K562 (cell line): ENCODE measurements at regions of chr22 and their contacts with region 1.

Region 1: DNA sequence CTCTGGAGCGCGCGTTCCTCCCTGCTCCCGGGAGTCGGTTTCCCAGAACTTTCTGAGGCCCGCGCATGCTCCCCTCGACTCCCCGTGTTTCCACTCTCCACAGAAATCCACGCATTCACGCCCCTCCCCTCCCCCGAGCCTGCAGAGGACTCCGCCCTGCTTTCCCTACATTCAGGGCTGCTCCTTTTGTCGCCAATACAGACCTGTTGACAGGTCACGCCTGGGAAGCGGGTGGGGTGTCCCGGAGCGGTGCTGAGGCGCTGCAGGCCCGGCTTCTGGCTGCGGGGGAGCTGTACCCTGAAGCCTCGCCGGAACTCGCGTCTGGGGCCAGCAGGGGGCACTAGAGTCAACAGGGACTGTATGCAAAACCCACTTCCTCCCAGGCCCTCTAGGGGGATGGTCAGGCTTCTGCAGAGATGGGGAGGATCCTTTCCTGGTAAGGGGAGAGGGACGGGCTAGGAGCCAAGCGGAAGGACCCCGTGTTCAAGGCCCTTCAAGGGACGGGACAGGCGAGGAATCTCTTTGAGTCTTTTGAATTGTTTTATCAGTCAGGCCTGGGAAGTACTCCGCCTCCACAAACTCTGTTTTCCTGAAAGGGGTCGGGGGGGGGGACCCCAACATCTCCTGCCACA is at the start of gene PRAME:
- DNase-seq: peak; percentile 100
- ATAC-seq: peak; percentile 92
- H3K4me3 ChIP-seq: peak within 1 kb of the TSS; percentile 54
- H3K27ac ChIP-seq: peak within 1 kb of the TSS; percentile 78
- H3K4me1 ChIP-seq: peaks cover 39 to 43% of the 10 kb centered on the region in 2 experiments
- H3K27me3 ChIP-seq: no peaks in the 10 kb centered on the region; a peak in 1 of 5 replicates
- CTCF ChIP-seq: no peak
- EP300 ChIP-seq: no peak
- POLR2A ChIP-seq: no peak
- RAD21 ChIP-seq: no peak
- polyA plus RNA-seq, gene PRAME: 662 to 1,142 TPM

Region 2: DNA sequence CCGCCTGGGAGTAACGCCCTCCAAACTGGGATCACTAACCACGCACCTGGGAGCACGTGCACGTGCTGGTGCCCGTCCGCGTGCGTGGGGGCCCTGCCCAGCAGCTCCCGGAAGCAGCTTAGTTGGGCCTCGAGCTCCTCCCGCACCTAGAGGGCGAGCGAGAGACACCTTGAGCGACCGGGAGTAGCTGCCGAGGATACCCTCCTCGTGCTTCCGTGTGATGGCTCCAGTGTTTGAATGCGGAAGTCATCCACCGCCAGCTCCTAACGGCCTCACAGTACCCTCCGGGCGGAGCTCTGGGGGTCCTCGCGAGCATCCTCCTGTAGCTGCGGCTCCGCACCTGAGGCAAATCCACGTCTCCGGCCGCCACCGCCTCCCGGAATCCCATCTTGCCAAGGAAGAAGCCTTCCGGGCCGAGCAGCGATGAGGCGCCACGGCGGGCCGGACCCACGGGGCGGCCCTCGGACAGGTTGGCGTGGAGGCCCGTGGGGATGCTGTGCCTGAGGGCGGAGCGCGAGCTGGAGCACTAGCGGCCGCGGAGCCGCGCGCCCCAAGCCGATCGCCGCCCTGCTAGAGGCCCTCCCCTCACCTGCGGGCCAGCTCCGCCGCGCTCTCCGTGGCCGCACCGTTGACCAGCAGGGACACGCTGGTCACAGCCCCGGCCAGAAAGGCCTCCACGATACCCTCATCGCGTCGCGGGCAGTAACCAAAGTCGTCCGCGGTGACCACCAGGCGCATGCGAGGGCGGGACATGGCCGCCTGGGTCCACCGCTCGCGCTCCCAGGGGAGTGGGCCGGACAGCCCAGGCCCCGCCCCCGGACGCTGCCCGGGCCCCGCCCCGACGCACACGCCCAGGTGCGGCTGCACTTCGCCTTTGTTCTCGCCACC is 929.6 kb before region 1 on chr22 and contains the start of gene YDJC:
- CTCF ChIA-PET with region 1: no interaction called
- POLR2A ChIA-PET with region 1: no interaction called
- in situ Hi-C with region 1: no loop called
- intact Hi-C with region 1: loop called (anchors 10 kb)
- DNase-seq: peak; percentile 100
- ATAC-seq: peak; percentile 83
- H3K4me3 ChIP-seq: peak within 1 kb of the TSS; percentile 59
- H3K27ac ChIP-seq: peak within 1 kb of the TSS; percentile 89
- H3K4me1 ChIP-seq: peaks cover 57 to 85% of the 10 kb centered on the region in 2 experiments
- H3K27me3 ChIP-seq: no peaks in the 10 kb centered on the region
- CTCF ChIP-seq: peak in 1 of 3 experiments; percentile 99; a peak in 2 of 6 replicates
- EP300 ChIP-seq: peak; percentile 90
- POLR2A ChIP-seq: no peak
- RAD21 ChIP-seq: no peak
- polyA plus RNA-seq, gene YDJC: 13.5 to 23.5 TPM

Region 3: DNA sequence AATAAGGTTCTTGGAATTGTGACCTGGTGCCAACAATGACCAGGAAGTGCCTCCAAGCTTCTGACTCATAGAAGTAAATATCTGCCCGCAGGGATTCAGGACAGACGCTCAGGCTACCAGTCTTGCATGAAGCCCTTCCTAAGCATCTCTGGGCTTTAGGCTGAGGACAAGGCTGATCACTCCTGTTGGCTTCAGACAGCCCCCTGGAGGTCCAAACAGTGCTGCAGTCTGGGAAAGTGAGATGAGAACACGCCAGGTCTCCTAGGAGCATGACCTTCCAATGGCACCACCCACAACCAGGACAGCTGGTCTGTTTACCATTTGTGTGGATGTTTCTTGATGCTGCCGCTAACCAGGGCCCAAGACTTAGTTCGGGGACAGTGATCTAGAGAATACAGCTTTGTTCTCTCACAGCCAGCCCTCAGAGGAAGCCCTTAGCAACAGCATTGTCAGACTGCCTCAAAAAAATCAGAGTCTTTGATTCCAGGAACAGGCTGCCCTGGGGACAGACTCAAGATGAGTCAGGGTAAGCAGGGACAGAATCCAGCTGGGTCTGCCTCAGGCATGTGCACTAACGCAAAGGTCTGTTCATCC is 161.7 kb before region 1 on chr22:
- CTCF ChIA-PET with region 1: no interaction called
- POLR2A ChIA-PET with region 1: no interaction called
- in situ Hi-C with region 1: no loop called
- intact Hi-C with region 1: no loop called
- DNase-seq: peak; percentile 37 to 58 (median 49)
- ATAC-seq: peak; percentile 78
- H3K4me3 ChIP-seq: no peak overlapping the region
- H3K27ac ChIP-seq: no peak overlapping the region
- H3K4me1 ChIP-seq: no peaks in the 10 kb centered on the region
- H3K27me3 ChIP-seq: peaks cover 0 to 31% of the 10 kb centered on the region in 2 experiments; a peak in 3 of 5 replicates
- CTCF ChIP-seq: peak; percentile 62 to 65 (median 63)
- EP300 ChIP-seq: no peak
- POLR2A ChIP-seq: no peak
- RAD21 ChIP-seq: peak in 1 of 2 experiments; percentile 46; a peak in 2 of 4 replicates

Region 4: GRCh38 chr22:22479999-22480532 is 79.0 kb before region 1 on chr22:
- CTCF ChIA-PET with region 1: interaction called, 3 read pairs
- POLR2A ChIA-PET with region 1: interaction called, 8 read pairs
- in situ Hi-C with region 1: no loop called
- intact Hi-C with region 1: loop called (anchors 5 kb)
- DNase-seq: peak in 2 of 4 experiments; percentile 14 to 33
- ATAC-seq: peak; percentile 52
- H3K4me3 ChIP-seq: no peak overlapping the region
- H3K27ac ChIP-seq: no peak overlapping the region
- H3K4me1 ChIP-seq: peaks cover 0 to 7% of the 10 kb centered on the region in 2 experiments; a peak in 2 of 5 replicates
- H3K27me3 ChIP-seq: no peaks in the 10 kb centered on the region; a peak in 1 of 5 replicates
- CTCF ChIP-seq: no peak
- EP300 ChIP-seq: no peak
- POLR2A ChIP-seq: no peak
- RAD21 ChIP-seq: no peak

Region 5: GRCh38 chr22:22546490-22546889 is 12.6 kb before region 1 on chr22:
- CTCF ChIA-PET with region 1: interaction called, 4 read pairs
- POLR2A ChIA-PET with region 1: interaction called, 708 read pairs
- in situ Hi-C with region 1: no loop called
- intact Hi-C with region 1: no loop called
- DNase-seq: peak; percentile 56 to 72 (median 68)
- ATAC-seq: peak; percentile 44
- H3K4me3 ChIP-seq: no peak overlapping the region
- H3K27ac ChIP-seq: no peak overlapping the region; the same call in 2 of the 3 replicates
- H3K4me1 ChIP-seq: peaks cover 13 to 20% of the 10 kb centered on the region in 2 experiments
- H3K27me3 ChIP-seq: no peaks in the 10 kb centered on the region
- CTCF ChIP-seq: no peak
- EP300 ChIP-seq: no peak
- POLR2A ChIP-seq: no peak
- RAD21 ChIP-seq: no peak

Region 6: GRCh38 chr22:22588485-22589164 is 29.5 kb after region 1 on chr22:
- CTCF ChIA-PET with region 1: interaction called, 16 read pairs
- POLR2A ChIA-PET with region 1: interaction called, 10 read pairs
- in situ Hi-C with region 1: no loop called
- intact Hi-C with region 1: loop called (anchors 1 kb)
- DNase-seq: no peak
- ATAC-seq: no peak
- H3K4me3 ChIP-seq: no peak overlapping the region
- H3K27ac ChIP-seq: no peak overlapping the region
- H3K4me1 ChIP-seq: no peaks in the 10 kb centered on the region
- H3K27me3 ChIP-seq: peaks cover 17 to 33% of the 10 kb centered on the region in 2 experiments; a peak in 4 of 5 replicates
- CTCF ChIP-seq: no peak
- EP300 ChIP-seq: no peak
- POLR2A ChIP-seq: no peak
- RAD21 ChIP-seq: no peak